ENCODE measurements at regions of chrX and their contacts with region 1.

Region 1: DNA sequence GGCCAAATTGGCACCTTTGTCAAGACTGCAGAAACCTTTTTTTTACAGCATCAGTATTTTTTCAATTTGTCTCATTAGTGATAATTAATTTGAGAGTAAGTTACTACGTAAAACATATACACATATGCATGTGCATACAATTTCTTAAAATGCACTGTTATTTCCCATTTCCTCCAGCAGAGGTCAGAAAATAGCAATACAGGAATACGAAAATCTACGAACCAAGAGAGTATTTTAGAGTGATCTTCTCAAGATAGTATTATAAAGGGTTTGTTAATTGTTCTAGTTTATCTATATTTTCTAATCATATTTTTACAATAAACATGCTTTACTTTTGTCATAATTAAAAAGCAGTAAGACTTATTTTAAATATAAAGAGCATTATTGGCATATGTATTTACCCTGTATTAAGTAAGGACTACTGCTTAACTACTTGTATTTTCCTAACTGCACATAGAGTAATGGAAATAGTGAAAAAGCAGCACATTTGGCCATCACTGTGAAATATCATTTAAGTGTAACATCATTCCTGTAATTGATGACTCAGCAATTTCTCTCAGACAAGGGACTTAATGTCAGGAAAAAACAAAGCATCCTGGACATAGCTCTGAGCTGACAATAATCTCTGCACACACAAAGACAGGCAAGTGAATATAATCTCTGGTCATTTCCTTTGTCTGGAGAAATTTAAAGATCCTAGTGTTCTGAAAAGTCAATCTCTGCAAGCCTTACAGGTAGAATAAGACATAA is 45.6 kb downstream of the MAOB start:
- DNase-seq: no peak
- H3K4me3 ChIP-seq: no peak overlapping the region
- H3K27ac ChIP-seq: no peak overlapping the region
- H3K4me1 ChIP-seq: no peaks in the 10 kb centered on the region
- H3K27me3 ChIP-seq: no peaks in the 10 kb centered on the region
- CTCF ChIP-seq: peak; percentile 56 to 69 (median 61)
- POLR2A ChIP-seq: no peak

Region 2: GRCh38 chrX:43939187-43939926 is 102.7 kb after region 1 on chrX:
- intact Hi-C with region 1: loop called in 1 of 2 experiments (anchors 10 kb)
- DNase-seq: no peak
- H3K4me3 ChIP-seq: no peak overlapping the region
- H3K27ac ChIP-seq: no peak overlapping the region
- H3K4me1 ChIP-seq: no peaks in the 10 kb centered on the region
- H3K27me3 ChIP-seq: peaks cover 12% of the 10 kb centered on the region
- CTCF ChIP-seq: peak in 4 of 6 experiments; percentile 20 to 44 (median 26)
- POLR2A ChIP-seq: no peak